Gastrocnemius medialis (tissue), 4 donors: ENCODE measurements at regions of chr6 and their contacts with region 1.

Region 1: GRCh38 chr6:72622094-72622940 is 453 bp downstream of the KCNQ5 start:
- DNase-seq: peak in 1 of 2 donors; percentile 54
- ATAC-seq: peak; percentile 46 to 53
- H3K4me3 ChIP-seq: peak overlapping the region; percentile 66 to 83 (median 76)
- H3K27ac ChIP-seq: peak overlapping the region; percentile 64 to 82 (median 80)
- H3K4me1 ChIP-seq: peaks cover 13 to 38% of the 10 kb centered on the region in 2 donors
- H3K27me3 ChIP-seq: no peaks in the 10 kb centered on the region
- CTCF ChIP-seq: peak in 4 of 5 experiments; percentile 23 to 42 (median 32)
- POLR2A ChIP-seq: peak in 1 of 2 donors; percentile 24

Region 2: GRCh38 chr6:72740135-72740534 is 117.8 kb after region 1 on chr6:
- in situ Hi-C with region 1: no loop called
- intact Hi-C with region 1: loop called (anchors 1 kb)
- DNase-seq: no peak
- ATAC-seq: no peak
- H3K4me3 ChIP-seq: no peak overlapping the region
- H3K27ac ChIP-seq: peak overlapping the region in 3 of 4 donors; percentile 11 to 86 (median 78)
- H3K4me1 ChIP-seq: peaks cover 27 to 35% of the 10 kb centered on the region in 2 donors
- H3K27me3 ChIP-seq: no peaks in the 10 kb centered on the region
- CTCF ChIP-seq: no peak
- POLR2A ChIP-seq: no peak

Region 3: GRCh38 chr6:72819609-72820008 is 197.3 kb after region 1 on chr6:
- in situ Hi-C with region 1: no loop called
- intact Hi-C with region 1: loop called (anchors 5 kb)
- DNase-seq: peak; percentile 76 to 89
- ATAC-seq: peak; percentile 99 to 100
- H3K4me3 ChIP-seq: no peak overlapping the region
- H3K27ac ChIP-seq: peak overlapping the region; percentile 83 to 84 (median 83)
- H3K4me1 ChIP-seq: peaks cover 48 to 55% of the 10 kb centered on the region in 2 donors
- H3K27me3 ChIP-seq: no peaks in the 10 kb centered on the region
- CTCF ChIP-seq: no peak
- POLR2A ChIP-seq: no peak

Region 4: GRCh38 chr6:72950114-72950860 is 328.0 kb after region 1 on chr6:
- in situ Hi-C with region 1: no loop called
- intact Hi-C with region 1: loop called (anchors 5 kb)
- DNase-seq: peak; percentile 10 to 27
- ATAC-seq: peak; percentile 93 to 97
- H3K4me3 ChIP-seq: peak overlapping the region in 2 of 4 donors; percentile 0 to 10
- H3K27ac ChIP-seq: peak overlapping the region; percentile 73 to 83 (median 80)
- H3K4me1 ChIP-seq: peaks cover 50 to 78% of the 10 kb centered on the region in 2 donors
- H3K27me3 ChIP-seq: no peaks in the 10 kb centered on the region
- CTCF ChIP-seq: no peak
- POLR2A ChIP-seq: no peak

Region 5: DNA sequence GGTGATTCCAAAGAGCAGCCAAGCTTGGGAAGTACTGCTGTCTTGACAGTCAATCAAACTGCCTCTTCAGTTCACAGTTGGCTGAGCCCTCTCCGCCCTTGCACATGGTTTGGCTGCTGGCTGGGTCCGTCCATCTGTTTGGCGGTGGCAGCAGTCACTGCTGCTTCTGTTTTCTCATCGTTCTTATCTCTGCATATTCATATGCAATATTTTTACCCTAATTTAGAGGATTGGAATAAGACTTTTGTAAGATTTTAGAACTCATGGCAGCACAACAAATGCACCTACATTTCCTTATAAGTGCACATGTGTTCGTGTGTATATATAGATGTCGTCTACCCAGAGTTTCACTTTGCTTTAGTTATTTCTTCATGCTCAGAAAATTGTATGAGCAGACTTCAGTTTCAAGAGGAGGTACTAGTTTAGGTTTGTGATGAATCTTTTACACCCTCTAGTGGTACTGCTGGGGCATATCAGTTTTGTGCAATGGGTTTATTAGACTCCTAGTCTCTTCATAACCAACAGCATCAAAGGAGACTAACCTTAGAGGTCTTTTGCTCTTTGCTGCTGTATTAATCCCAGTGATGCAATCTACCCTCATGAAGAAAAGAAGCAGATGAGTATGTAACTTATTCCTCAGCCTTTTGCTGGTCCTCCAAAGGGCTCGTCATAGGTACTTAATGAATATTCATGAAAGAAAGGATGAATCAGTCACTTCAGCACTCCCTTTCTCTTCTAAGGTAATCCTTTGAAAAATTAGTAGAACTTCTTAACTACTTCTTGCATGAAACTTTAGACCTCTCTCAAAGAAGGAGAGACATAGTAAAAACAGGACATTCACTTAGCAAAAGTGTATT is 558.7 kb after region 1 on chr6:
- in situ Hi-C with region 1: no loop called
- intact Hi-C with region 1: loop called (anchors 5 kb)
- DNase-seq: peak in 1 of 2 donors; percentile 30
- ATAC-seq: peak; percentile 91 to 95
- H3K4me3 ChIP-seq: peak overlapping the region in 3 of 4 donors; percentile 11 to 33 (median 21)
- H3K27ac ChIP-seq: peak overlapping the region in 3 of 4 donors; percentile 15 to 62 (median 44)
- H3K4me1 ChIP-seq: peaks cover 7 to 10% of the 10 kb centered on the region in 2 donors
- H3K27me3 ChIP-seq: no peaks in the 10 kb centered on the region
- CTCF ChIP-seq: peak; percentile 58 to 89 (median 76)
- POLR2A ChIP-seq: no peak

Region 6: DNA sequence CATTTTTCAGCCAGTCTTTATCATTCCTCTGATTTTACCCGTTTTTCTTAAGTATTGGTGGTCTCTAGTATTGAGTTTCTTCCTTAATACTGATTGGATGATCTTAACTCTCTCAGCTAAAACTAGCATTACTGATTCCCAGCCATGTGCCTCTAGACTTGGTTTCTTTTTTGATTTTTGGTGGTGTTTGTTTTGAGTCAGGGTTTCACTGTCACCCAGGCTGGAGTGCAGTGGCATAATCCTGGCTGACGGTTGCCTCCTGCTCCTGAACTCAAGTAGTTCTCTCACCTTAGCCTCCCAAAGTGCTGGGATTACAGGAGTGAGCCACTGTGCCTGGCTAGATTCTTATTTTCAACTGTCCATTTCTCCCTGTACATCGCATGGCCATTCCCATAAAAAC is 706.9 kb after region 1 on chr6:
- in situ Hi-C with region 1: no loop called
- intact Hi-C with region 1: no loop called
- DNase-seq: no peak
- ATAC-seq: no peak
- H3K4me3 ChIP-seq: no peak overlapping the region
- H3K27ac ChIP-seq: no peak overlapping the region
- H3K4me1 ChIP-seq: no peaks in the 10 kb centered on the region
- H3K27me3 ChIP-seq: no peaks in the 10 kb centered on the region
- CTCF ChIP-seq: no peak
- POLR2A ChIP-seq: no peak